ENCODE measurements at regions of chr1 and their contacts with region 1.

Region 1: GRCh38 chr1:225735252-225736149 is 42.1 kb upstream of the SRP9 start:
- DNase-seq: peak; percentile 37
- H3K4me3 Mint-ChIP-seq: no peak overlapping the region
- H3K27ac Mint-ChIP-seq: no peak overlapping the region
- H3K4me1 Mint-ChIP-seq: peaks cover 29% of the 10 kb centered on the region
- H3K27me3 Mint-ChIP-seq: no peaks in the 10 kb centered on the region
- CTCF ChIP-seq: no peak

Region 2: DNA sequence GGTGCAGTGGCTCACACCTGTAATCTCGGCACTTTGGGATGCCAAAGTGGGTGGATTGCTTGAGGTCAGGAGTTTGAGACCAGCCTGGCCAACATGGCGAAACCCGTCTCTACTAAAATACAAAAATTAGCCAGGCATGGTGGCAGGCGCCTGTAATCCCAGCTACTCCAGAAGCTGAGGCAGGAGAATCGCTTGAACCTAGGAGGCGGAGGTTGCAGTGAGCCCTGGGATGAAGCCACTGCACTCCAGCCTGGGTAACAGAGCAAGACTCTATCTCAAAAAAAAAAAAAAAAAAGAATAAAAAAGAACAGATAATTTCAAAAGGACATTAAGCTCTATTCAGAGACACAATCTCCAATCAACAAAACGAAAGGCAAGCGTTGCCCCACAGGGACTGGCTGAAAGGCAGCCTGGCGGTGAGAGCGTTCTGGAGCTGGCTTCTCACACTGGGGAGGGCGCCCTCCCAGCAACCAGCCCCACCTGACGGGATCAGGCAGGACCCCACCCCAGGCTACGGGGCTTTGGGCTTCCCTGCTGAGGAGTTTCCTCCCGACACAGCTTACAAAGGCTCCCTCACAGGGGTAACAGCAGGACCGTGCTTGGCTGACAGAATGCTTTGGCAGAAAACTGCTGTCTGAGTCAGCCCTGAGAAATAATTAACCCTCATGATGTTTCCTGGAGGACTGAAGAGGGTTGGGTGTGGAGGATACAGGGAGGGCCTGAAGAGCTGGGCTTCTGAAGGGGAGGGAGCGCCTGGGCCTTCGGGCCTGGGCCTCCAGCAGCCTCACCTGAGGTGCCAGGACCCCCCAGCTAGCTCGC is 11.1 kb after region 1 on chr1:
- CTCF ChIA-PET with region 1: interaction called, 14 read pairs
- intact Hi-C with region 1: no loop called
- DNase-seq: peak; percentile 81
- H3K4me3 Mint-ChIP-seq: peak overlapping the region; percentile 54
- H3K27ac Mint-ChIP-seq: peak overlapping the region; percentile 71
- H3K4me1 Mint-ChIP-seq: peaks cover 23% of the 10 kb centered on the region
- H3K27me3 Mint-ChIP-seq: no peaks in the 10 kb centered on the region
- CTCF ChIP-seq: no peak

Region 3: GRCh38 chr1:225794954-225795353 is 59.5 kb after region 1 on chr1:
- CTCF ChIA-PET with region 1: no interaction called
- intact Hi-C with region 1: no loop called
- DNase-seq: no peak
- H3K4me3 Mint-ChIP-seq: no peak overlapping the region
- H3K27ac Mint-ChIP-seq: no peak overlapping the region
- H3K4me1 Mint-ChIP-seq: no peaks in the 10 kb centered on the region
- H3K27me3 Mint-ChIP-seq: no peaks in the 10 kb centered on the region
- CTCF ChIP-seq: no peak

Measured in Calu3 (cell line).